MCF 10A (cell line): ENCODE measurements at regions of chr13 and their contacts with region 1.

Region 1: GRCh38 chr13:51452361-51453206 is at the start of gene INTS6:
- DNase-seq: peak; percentile 99
- H3K4me3 Mint-ChIP-seq: peak within 1 kb of the TSS; percentile 80
- H3K27ac Mint-ChIP-seq: peak within 1 kb of the TSS; percentile 94
- H3K4me1 Mint-ChIP-seq: peaks cover 24% of the 10 kb centered on the region
- H3K27me3 Mint-ChIP-seq: no peaks in the 10 kb centered on the region
- CTCF ChIP-seq: no peak
- total RNA-seq, gene INTS6: 74.2 and 78.5 TPM in 2 replicates

Region 2: DNA sequence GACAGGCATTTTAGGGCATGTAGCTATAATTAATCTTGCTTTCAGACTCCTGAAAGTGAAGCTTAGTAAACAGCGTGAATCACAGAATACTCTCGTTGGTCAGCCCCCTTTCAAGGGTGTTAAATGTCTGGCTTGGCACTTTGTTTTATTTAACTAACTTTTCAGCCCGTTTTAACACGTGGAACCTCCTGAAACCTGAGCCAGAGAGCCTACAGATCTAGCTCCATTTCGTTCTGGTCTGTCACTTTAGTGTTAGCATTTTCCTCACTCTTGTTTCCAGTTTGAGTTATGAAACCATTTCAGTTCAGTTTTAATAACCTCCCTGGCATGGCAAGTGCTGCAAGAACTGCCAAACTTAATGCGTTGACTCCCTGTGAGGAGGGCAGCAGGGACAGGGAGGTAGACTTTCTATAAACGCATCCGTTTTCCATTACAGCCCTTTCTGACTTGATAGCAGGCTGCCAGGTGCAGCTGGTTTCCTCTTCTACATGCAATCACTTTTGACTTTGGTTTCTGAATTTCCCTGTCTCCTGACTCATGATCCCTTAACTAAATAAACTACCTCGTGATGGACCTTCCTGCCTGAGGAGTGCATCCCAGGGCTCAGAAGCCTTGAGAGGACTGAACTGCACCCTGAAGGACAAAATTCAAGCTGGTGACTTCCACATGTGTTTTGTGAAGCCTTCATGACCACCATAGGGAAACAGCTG is 801.8 kb before region 1 on chr13:
- CTCF ChIA-PET with region 1: no interaction called
- POLR2A ChIA-PET with region 1: no interaction called
- intact Hi-C with region 1: no loop called
- DNase-seq: no peak
- H3K4me3 Mint-ChIP-seq: no peak overlapping the region
- H3K27ac Mint-ChIP-seq: no peak overlapping the region
- H3K4me1 Mint-ChIP-seq: peaks cover 6% of the 10 kb centered on the region
- H3K27me3 Mint-ChIP-seq: no peaks in the 10 kb centered on the region
- CTCF ChIP-seq: no peak

Region 3: GRCh38 chr13:51479199-51479523 is 26.6 kb after region 1 on chr13:
- CTCF ChIA-PET with region 1: no interaction called
- POLR2A ChIA-PET with region 1: interaction called, 23 read pairs
- intact Hi-C with region 1: no loop called
- DNase-seq: peak; percentile 43
- H3K4me3 Mint-ChIP-seq: no peak overlapping the region
- H3K27ac Mint-ChIP-seq: no peak overlapping the region
- H3K4me1 Mint-ChIP-seq: peaks cover 9% of the 10 kb centered on the region
- H3K27me3 Mint-ChIP-seq: no peaks in the 10 kb centered on the region
- CTCF ChIP-seq: no peak

Region 4: GRCh38 chr13:51539887-51540286 is 87.3 kb after region 1 on chr13:
- CTCF ChIA-PET with region 1: no interaction called
- POLR2A ChIA-PET with region 1: interaction called, 22 read pairs
- intact Hi-C with region 1: no loop called
- DNase-seq: no peak
- H3K4me3 Mint-ChIP-seq: no peak overlapping the region
- H3K27ac Mint-ChIP-seq: peak overlapping the region; percentile 65
- H3K4me1 Mint-ChIP-seq: peaks cover 21% of the 10 kb centered on the region
- H3K27me3 Mint-ChIP-seq: no peaks in the 10 kb centered on the region
- CTCF ChIP-seq: no peak

Region 5: DNA sequence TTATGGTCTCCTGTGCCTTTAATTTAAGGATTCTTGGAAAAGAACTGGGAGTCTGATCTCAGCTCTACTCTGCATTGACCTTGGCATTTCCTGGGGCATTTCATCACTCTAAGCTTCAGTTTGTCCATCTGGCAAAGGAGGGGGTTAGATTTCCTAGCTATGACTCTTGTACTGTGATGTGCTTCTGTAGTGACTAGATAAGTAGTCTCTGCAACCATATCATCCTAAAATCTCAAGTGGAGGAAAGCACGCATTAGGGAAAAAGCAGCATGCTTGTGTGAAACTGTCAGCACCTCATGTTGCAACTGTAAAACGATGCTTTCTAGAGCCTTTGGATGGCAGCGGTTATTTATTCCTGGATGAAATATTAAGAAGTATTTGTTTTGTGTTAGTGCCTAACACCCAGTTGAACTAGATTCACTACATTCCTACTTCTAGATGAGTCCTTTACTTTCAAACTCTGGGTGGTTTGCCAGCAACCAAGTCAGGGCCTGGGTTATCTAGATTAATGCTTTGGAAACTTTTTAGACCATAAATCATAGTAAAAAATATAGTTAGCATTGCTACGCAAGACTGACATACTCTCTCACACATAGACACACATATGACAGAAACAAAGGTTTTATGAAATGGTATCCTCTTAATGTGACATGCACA is 138.5 kb after region 1 on chr13:
- CTCF ChIA-PET with region 1: interaction called, 4 read pairs
- POLR2A ChIA-PET with region 1: interaction called, 151 read pairs
- intact Hi-C with region 1: no loop called
- DNase-seq: peak; percentile 91
- H3K4me3 Mint-ChIP-seq: peak overlapping the region; percentile 61
- H3K27ac Mint-ChIP-seq: peak overlapping the region; percentile 77
- H3K4me1 Mint-ChIP-seq: peaks cover 59% of the 10 kb centered on the region
- H3K27me3 Mint-ChIP-seq: no peaks in the 10 kb centered on the region
- CTCF ChIP-seq: no peak

Region 6: GRCh38 chr13:51645154-51645650 is 192.6 kb after region 1 on chr13:
- CTCF ChIA-PET with region 1: no interaction called
- POLR2A ChIA-PET with region 1: interaction called, 13 read pairs
- intact Hi-C with region 1: loop called (anchors 1 kb)
- DNase-seq: peak; percentile 78
- H3K4me3 Mint-ChIP-seq: peak overlapping the region; percentile 52
- H3K27ac Mint-ChIP-seq: peak overlapping the region; percentile 95
- H3K4me1 Mint-ChIP-seq: peaks cover 39% of the 10 kb centered on the region
- H3K27me3 Mint-ChIP-seq: no peaks in the 10 kb centered on the region
- CTCF ChIP-seq: no peak

Region 7: DNA sequence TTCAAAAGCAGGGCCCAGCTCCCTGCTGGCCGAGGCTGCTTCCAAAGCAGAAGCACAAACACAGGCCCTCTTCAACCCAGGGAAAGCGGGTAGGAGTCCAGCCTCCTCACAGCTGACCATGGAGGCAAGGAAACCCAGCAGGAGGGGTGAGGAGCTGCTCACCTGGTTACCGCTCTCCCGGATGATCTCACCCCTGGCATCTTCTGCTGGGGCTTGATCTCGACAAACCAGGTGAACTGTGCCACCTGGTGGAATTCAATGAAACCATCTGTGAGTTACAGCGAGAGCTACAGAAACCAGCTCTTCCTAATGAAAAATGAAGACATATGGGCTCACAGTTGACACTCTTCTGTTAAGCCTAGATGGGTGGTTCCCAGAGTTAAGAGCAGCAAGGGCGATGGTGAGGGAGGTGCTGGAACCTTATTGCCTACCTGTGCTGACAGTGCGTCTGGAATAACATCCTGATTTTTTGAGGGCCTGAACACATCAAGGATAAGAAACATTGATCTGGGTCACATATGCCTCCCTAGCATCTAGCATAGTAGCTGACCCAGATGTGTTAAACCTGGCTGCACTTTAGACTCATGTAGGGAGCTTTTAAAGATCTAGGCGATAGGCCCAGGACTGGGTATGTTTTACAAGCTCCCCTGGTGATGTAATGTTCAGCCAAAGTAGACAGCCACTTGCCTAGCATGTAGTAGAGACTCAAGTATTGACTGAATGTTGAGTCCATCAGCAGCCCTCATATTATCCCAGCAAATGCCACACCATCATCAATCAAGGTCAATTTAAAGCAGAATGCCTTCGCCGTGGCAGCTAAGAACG is 345.3 kb after region 1 on chr13:
- CTCF ChIA-PET with region 1: interaction called, 11 read pairs
- POLR2A ChIA-PET with region 1: interaction called, 16 read pairs
- intact Hi-C with region 1: loop called (anchors 5 kb)
- DNase-seq: peak; percentile 83
- H3K4me3 Mint-ChIP-seq: no peak overlapping the region
- H3K27ac Mint-ChIP-seq: no peak overlapping the region
- H3K4me1 Mint-ChIP-seq: peaks cover 22% of the 10 kb centered on the region
- H3K27me3 Mint-ChIP-seq: no peaks in the 10 kb centered on the region
- CTCF ChIP-seq: peak; percentile 60